Heart right ventricle (tissue), 16 donors: ENCODE measurements at regions of chr7 and their contacts with region 1.

Region 1: DNA sequence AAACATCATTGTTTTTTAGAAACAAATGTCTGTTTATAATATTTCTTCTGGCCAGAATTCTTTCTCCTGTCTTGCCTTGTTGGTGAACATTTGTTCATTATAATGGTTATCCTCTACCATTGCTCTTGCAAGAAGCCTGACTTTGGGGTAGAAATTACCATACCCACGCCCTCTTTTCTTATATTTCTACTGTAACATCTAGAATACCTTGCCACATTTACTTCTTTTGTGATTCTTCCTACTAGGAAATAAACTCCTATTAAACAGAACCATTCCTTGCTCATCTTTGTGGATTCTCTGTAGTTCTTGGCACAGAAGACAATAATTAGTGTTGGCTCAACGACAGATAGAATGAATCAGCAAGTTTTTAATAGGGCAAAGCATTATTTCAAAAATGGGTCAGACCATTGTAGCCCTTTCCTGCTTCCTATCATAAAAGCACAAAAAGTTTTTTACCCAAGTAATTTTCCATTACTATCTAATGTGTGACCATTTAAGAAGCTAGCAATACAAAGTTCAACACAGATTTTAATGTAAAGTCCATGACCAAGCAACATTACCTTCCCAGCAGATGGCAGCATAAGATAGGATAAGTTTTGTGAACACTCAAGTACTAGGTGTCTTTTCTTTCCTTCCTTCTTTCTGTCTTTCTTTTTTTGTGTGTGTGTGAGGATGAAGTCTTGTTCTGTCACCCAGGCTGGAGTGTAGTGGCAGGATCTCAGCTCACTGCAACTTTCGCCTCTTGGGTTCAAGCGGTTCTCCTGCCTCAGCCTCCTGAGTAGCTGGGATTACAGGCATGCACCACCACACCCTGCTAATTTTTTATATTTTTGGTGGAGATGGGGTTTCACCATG is 270.4 kb downstream of the HGF start:
- DNase-seq: peak in 1 of 2 donors; percentile 45
- ATAC-seq: peak; percentile 59 to 87 (median 81)
- H3K4me3 ChIP-seq: no peak overlapping the region
- H3K27ac ChIP-seq: peak overlapping the region in 4 of 10 donors; percentile 16 to 57 (median 38)
- H3K4me1 ChIP-seq: peaks cover 0 to 16% (median 12%) of the 10 kb centered on the region in 9 donors
- H3K27me3 ChIP-seq: no peaks in the 10 kb centered on the region
- CTCF ChIP-seq: peak; percentile 19 to 79 (median 60)

Region 2: DNA sequence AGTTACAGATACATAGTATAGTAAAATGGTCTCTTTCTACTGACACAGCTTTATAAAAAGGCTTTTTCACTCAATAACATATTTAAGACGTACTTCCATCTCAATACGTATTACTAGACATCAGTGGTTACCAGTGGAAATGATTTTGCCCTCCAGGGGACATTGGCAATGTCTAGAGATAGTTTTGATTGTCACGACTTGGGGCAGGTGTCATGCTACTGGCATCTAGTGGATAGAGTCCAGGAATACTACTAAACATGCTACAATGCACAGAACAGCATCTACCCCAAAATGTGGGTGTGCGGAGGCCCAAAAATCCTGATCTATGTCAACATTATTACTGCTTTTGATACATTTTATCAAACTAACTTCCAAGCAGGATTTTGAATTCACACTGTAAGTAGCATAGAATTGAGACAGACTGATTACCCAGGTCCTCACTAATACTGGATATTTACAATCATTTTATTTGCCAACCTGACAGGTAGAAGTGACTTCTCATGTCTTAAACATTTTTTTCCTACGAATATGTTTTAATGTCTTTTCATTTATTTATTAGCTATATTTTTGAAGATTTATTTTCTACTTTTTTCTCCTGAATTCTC is 216.6 kb after region 1 on chr7:
- intact Hi-C with region 1: loop called in 4 of 10 experiments (anchors 5 to 10 kb)
- DNase-seq: peak in 1 of 2 donors; percentile 4
- ATAC-seq: no peak
- H3K4me3 ChIP-seq: no peak overlapping the region
- H3K27ac ChIP-seq: no peak overlapping the region
- H3K4me1 ChIP-seq: no peaks in the 10 kb centered on the region
- H3K27me3 ChIP-seq: no peaks in the 10 kb centered on the region
- CTCF ChIP-seq: peak in 6 of 9 donors; percentile 8 to 51 (median 24)

Region 3: GRCh38 chr7:81769891-81770727 is 270.6 kb after region 1 on chr7 and contains the start of gene HGF:
- intact Hi-C with region 1: loop called in 1 of 10 experiments (anchors 10 kb)
- DNase-seq: peak; percentile 39 to 78
- ATAC-seq: peak; percentile 75 to 86 (median 80)
- H3K4me3 ChIP-seq: peak within 1 kb of the TSS; percentile 14 to 58 (median 52)
- H3K27ac ChIP-seq: peak within 1 kb of the TSS in 9 of 10 donors; percentile 42 to 81 (median 64)
- H3K4me1 ChIP-seq: peaks cover 0 to 29% (median 3%) of the 10 kb centered on the region in 9 donors
- H3K27me3 ChIP-seq: no peaks in the 10 kb centered on the region
- CTCF ChIP-seq: peak in 5 of 9 donors; percentile 9 to 35 (median 30)
- total RNA-seq, gene HGF: 1.4 to 5.8 (median 2.9) TPM

Region 4: DNA sequence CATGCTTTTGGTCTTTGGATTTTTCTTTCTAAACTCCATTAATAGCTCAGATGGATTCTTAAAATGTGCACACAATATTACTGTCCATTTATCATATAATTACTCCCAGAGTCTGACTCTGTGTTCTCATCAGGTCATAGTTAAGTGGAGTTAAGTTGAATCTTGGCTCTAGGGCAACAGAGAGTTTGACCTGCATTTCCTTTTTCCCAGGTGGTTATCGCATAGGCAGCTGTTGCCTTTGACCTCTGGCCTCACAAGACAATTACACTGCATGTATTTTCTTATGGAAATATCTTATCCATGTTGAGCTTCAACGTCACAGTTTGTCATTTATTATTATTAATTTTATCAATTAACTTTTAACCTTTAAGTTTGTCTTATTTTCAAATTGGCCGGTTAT is 507.8 kb after region 1 on chr7:
- intact Hi-C with region 1: loop called in 2 of 10 experiments (anchors 5 kb)
- DNase-seq: no peak
- ATAC-seq: peak in 3 of 8 donors; percentile 29 to 72 (median 41)
- H3K4me3 ChIP-seq: no peak overlapping the region
- H3K27ac ChIP-seq: peak overlapping the region in 2 of 10 donors; percentile 8 to 44
- H3K4me1 ChIP-seq: peaks cover 0 to 14% (median 10%) of the 10 kb centered on the region in 9 donors
- H3K27me3 ChIP-seq: no peaks in the 10 kb centered on the region
- CTCF ChIP-seq: no peak

Region 5: GRCh38 chr7:82605247-82605872 is 1105.9 kb after region 1 on chr7:
- intact Hi-C with region 1: loop called in 3 of 10 experiments (anchors 10 kb)
- DNase-seq: peak in 1 of 2 donors; percentile 8
- ATAC-seq: no peak
- H3K4me3 ChIP-seq: no peak overlapping the region
- H3K27ac ChIP-seq: no peak overlapping the region
- H3K4me1 ChIP-seq: no peaks in the 10 kb centered on the region
- H3K27me3 ChIP-seq: no peaks in the 10 kb centered on the region
- CTCF ChIP-seq: peak; percentile 55 to 82 (median 70)